H1 (cell line): ENCODE measurements at regions of chr12 and their contacts with region 1.

Region 1: DNA sequence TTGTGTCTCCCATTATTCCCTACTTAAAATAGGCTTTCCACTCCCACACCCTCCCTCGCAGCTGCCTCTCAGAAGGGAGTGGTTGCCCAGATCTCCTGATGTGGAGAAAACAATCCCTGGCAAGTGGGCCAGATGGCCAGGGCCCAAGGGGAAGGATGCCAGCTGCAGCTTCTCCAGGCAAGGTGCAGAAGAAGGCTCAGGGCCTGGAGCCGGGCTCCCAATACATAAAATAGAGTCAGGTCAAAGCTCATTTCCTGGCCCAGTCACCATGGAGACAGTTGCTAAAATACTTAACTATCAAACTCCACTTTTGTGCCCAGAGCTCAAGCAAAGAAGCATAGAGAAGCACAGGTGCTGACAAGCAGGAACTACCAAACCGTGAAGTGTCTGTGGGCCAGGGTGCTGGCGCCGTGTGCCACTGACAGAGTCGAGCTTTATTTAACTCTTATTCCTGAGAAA is 45.7 kb upstream of the ITPR2 start:
- DNase-seq: no peak
- H3K4me3 ChIP-seq: no peak overlapping the region
- H3K27ac ChIP-seq: no peak overlapping the region
- H3K4me1 ChIP-seq: no peaks in the 10 kb centered on the region
- H3K27me3 ChIP-seq: 0 out of 7 replicates have a peak, but pooled peaks cover 0 to under 1% (median 0%) of the 10 kb centered on the region in 4 experiments
- CTCF ChIP-seq: no peak
- EP300 ChIP-seq: no peak
- POLR2A ChIP-seq: no peak
- RAD21 ChIP-seq: no peak

Region 2: DNA sequence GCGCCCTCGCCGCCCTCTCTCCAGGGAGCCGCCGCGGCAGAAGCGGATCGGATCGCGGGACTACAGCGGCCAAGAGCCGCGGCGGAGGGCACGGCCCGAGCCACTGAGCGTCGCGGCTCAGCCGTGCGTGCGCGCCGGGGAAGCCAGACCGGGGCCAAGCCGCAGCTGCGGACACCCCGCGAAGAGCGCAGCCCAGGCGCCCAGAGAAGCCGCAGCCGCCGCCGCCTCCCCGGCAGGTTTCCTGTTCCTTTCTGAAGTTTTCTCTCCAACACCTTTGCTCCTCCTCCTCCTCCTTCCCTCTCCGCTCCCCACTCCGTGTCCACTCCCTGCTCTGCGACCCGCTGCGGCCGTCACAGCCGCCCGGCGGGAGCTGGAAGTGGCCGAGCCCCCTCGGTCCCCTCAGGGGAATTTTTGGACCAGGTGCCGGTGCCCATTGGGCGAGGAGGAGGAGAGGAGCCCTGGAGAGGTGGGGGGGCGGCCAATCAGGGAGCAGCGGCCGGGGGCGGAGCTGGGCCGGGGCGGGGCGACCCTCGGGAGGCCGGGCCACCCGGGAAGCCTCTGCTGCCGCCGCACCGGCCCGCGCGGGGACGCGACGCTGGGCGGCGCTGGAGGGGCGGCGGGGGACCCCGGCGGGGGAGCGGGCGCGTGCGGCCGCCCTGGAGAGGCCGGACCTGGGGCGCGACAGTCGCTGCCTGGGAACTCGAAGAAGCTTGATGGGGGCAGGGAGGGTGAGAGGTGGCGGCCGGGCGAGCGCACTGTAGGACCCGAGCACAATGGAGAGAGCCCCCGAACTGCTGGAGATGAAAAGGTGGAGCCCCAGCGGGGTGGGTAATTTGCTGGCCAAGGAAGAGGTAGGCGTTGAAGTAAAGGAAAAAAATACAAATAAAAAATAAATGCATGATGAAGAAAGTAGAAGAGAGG is 45.6 kb before region 1 on chr12 and contains the start of gene ITPR2:
- CTCF ChIA-PET with region 1: interaction called, 16 read pairs
- POLR2A ChIA-PET with region 1: interaction called, 3 read pairs
- DNase-seq: peak; percentile 73 to 94
- H3K4me3 ChIP-seq: peak within 1 kb of the TSS; percentile 75 to 84 (median 78)
- H3K27ac ChIP-seq: no peak within 1 kb of the TSS
- H3K4me1 ChIP-seq: peaks cover 0 to 4% (median 2%) of the 10 kb centered on the region in 4 experiments; a peak in 4 of 7 replicates
- H3K27me3 ChIP-seq: peaks cover 0 to 6% (median 1%) of the 10 kb centered on the region in 4 experiments; a peak in 1 of 7 replicates
- CTCF ChIP-seq: peak in 2 of 3 experiments; percentile 6 to 40; a peak in 1 of 4 replicates
- EP300 ChIP-seq: no peak
- POLR2A ChIP-seq: peak in 1 of 2 experiments; percentile 53; a peak in 1 of 3 replicates
- RAD21 ChIP-seq: peak in 1 of 2 experiments; percentile 7; a peak in 1 of 4 replicates
- total RNA-seq, gene ITPR2: 48.3 and 48.4 TPM in 2 replicates